PC-9 (cell line): ENCODE measurements at regions of chr4 and their contacts with region 1.

Region 1: GRCh38 chr4:41257257-41257901 is 651 bp downstream of the UCHL1 start:
- DNase-seq: peak; percentile 58 to 88
- H3K4me3 ChIP-seq: peak overlapping the region; percentile 99
- H3K27ac ChIP-seq: peak overlapping the region; percentile 90
- H3K4me1 ChIP-seq: peaks cover 33% of the 10 kb centered on the region
- H3K27me3 ChIP-seq: no peaks in the 10 kb centered on the region
- CTCF ChIP-seq: no peak

Region 2: DNA sequence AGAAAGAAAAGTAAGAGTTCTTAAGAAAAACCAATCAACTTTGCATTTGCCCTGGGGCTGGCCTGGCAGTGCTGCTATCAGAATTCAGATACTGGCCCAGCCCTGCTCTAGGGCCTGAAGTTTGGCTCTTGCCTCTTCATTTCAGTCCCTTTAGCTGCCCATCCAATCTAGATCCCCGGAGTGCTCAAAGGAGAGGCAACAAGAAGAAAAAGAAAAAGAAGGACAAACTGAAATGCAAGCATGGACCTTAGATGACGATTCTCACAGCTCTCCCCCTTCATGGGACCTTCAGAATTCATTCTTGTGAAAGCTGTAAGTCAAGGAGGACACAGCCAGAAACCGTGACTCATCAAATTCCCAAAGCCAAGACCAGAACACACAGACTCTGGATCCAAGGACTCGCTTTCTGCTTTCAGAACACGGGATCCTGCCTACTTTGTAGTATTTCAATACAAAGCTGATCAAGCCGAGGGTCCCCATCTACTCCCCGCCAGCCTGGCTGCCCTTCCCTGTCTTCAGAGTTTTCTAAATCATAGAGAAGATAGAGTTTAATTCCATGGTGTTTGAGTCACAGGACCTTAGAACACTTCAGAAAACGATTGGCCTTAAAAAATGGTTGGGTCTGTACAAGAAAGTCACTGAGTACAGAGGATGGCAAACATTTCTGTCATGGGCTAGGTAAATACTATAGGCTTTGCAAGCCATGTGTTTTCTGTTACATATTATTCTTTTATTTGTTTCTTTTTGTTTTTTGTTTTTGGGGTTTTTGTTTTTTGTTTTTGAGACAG is 731.4 kb before region 1 on chr4:
- CTCF ChIA-PET with region 1: no interaction called
- POLR2A ChIA-PET with region 1: interaction called, 23 read pairs
- intact Hi-C with region 1: no loop called
- DNase-seq: peak; percentile 55 to 81
- H3K4me3 ChIP-seq: peak overlapping the region; percentile 19; the same call in 1 of the 2 replicates
- H3K27ac ChIP-seq: peak overlapping the region; percentile 92
- H3K4me1 ChIP-seq: peaks cover 25% of the 10 kb centered on the region
- H3K27me3 ChIP-seq: no peaks in the 10 kb centered on the region
- CTCF ChIP-seq: no peak

Region 3: DNA sequence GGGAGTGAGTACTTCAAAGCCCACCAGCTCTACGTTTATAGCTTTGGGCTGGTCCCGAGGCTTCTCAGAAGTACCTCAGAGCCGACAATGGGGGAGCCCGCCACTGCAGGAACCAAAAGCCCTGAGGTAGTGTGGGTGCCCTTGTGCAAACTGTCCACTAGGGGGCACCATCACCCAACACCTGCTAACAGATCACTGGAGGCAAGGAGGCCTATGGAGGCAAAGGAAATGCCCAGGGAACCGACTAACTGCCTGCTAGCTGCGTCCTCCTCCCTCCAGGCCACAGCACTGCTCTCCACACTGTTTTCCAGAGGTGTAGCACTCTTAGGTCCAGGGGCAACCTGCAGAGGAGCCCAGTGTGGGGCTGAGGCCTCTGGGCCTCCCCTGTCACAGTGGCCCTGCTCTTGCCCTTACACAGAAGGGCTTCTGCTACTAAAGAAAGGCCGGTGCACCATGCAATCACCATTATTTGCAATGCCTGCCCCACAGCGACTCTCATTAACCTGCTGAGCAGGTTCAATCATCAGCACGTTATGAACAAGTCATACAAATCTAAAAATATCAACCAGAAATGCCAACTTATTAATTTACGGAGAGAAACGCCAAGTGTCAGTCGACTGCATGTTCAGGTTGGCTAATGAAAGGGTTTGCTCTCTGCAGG is 348.5 kb before region 1 on chr4:
- CTCF ChIA-PET with region 1: no interaction called
- POLR2A ChIA-PET with region 1: interaction called, 5 read pairs
- intact Hi-C with region 1: loop called (anchors 2 kb)
- DNase-seq: peak; percentile 41 to 80
- H3K4me3 ChIP-seq: no peak overlapping the region
- H3K27ac ChIP-seq: no peak overlapping the region
- H3K4me1 ChIP-seq: peaks cover 10% of the 10 kb centered on the region; the same call in 1 of the 2 replicates
- H3K27me3 ChIP-seq: no peaks in the 10 kb centered on the region
- CTCF ChIP-seq: peak; percentile 92

Region 4: DNA sequence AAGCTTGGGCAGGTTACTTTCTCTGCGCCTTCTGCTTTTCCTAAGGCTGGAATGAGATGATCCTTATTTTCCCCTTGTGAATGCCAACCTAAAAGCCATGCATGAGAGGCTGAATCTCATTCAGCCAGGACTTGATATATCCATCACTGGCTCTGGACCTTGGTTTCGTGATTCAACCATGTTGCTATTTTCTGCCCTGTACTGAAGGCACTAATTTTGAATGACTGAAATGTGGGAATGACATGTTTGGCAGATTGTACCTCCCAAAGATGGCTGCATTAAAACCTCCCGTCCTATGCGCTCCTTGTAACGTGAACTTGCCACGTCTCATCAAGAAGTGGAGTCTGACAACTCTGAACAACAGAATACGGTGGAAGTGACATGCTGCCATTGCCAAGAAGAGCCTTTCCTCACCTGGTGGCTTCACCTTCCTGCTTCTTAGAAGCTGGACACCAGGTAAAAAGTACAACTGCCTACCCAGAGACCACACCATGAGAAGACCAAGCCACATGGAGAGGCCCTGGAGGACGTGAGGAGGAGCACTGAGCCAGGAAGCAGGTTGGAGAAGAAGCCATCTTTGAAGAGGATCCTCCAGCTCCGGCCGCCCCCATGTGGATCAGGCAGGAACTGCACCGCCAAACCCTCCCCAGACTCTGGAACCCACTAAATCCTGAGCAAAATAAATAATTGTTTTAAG is 333.1 kb before region 1 on chr4:
- CTCF ChIA-PET with region 1: interaction called, 3 read pairs
- POLR2A ChIA-PET with region 1: interaction called, 7 read pairs
- intact Hi-C with region 1: loop called (anchors 1 kb)
- DNase-seq: peak in 1 of 2 experiments; percentile 68
- H3K4me3 ChIP-seq: no peak overlapping the region
- H3K27ac ChIP-seq: no peak overlapping the region
- H3K4me1 ChIP-seq: no peaks in the 10 kb centered on the region
- H3K27me3 ChIP-seq: no peaks in the 10 kb centered on the region
- CTCF ChIP-seq: peak; percentile 94

Region 5: GRCh38 chr4:41111791-41112190 is 145.6 kb before region 1 on chr4:
- CTCF ChIA-PET with region 1: no interaction called
- POLR2A ChIA-PET with region 1: no interaction called
- intact Hi-C with region 1: no loop called
- DNase-seq: no peak
- H3K4me3 ChIP-seq: no peak overlapping the region
- H3K27ac ChIP-seq: no peak overlapping the region
- H3K4me1 ChIP-seq: no peaks in the 10 kb centered on the region
- H3K27me3 ChIP-seq: no peaks in the 10 kb centered on the region
- CTCF ChIP-seq: no peak

Region 6: DNA sequence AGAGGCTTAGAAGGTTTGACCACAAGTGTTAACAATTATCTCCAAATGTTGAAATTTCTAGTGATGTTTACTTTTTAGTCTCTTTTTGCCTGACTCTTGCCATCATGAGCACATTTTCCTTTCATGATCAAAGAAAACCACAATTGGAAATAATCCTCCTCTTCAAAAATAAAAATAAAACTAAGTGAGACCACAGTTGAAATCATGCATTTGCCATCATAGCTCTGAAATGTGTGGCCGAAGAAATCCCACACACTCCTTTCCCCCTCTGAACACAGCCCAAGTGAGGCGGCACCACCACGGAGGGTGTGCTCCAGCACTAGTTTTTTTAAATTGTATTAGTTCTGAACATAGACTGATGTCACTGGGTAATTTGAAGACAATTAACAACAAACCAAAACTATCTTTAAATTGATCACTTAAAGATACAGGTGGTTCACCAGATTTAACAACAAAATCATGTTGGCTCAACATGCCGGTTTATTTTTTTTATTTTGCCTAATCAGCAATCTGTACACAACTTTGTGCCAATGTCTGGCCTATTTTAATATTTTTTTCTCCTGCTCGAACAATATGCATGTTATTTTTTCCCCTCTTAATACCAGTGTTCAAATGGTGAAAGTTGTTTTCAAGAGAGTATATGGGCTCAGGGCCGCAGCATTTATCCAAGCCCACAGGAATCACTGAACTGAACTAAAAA is 60.6 kb before region 1 on chr4:
- CTCF ChIA-PET with region 1: no interaction called
- POLR2A ChIA-PET with region 1: no interaction called
- intact Hi-C with region 1: no loop called
- DNase-seq: no peak
- H3K4me3 ChIP-seq: no peak overlapping the region
- H3K27ac ChIP-seq: no peak overlapping the region
- H3K4me1 ChIP-seq: no peaks in the 10 kb centered on the region
- H3K27me3 ChIP-seq: no peaks in the 10 kb centered on the region
- CTCF ChIP-seq: no peak

Region 7: DNA sequence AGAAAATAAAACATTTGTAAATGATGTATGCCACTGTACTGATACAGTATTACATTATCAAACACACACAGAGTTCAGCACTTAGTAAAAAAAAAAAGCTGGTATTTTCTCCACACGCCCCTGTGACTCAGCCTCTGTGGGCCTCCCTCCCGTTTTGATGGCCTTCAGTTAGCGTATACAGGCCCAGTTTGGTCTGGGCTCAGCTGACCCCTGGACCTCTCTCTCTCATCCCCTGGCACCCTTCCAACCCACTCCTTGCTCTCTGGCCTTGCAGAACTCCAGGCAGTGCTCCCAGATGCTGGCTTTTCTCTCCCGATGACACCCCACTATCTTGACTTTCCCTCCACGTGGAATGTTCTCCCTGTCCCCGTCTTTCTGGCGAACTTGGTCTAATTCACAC is 191.6 kb after region 1 on chr4:
- CTCF ChIA-PET with region 1: no interaction called
- POLR2A ChIA-PET with region 1: interaction called, 16 read pairs
- intact Hi-C with region 1: no loop called
- DNase-seq: no peak
- H3K4me3 ChIP-seq: no peak overlapping the region
- H3K27ac ChIP-seq: no peak overlapping the region
- H3K4me1 ChIP-seq: no peaks in the 10 kb centered on the region; the same call in 1 of the 2 replicates
- H3K27me3 ChIP-seq: no peaks in the 10 kb centered on the region
- CTCF ChIP-seq: no peak

Region 8: DNA sequence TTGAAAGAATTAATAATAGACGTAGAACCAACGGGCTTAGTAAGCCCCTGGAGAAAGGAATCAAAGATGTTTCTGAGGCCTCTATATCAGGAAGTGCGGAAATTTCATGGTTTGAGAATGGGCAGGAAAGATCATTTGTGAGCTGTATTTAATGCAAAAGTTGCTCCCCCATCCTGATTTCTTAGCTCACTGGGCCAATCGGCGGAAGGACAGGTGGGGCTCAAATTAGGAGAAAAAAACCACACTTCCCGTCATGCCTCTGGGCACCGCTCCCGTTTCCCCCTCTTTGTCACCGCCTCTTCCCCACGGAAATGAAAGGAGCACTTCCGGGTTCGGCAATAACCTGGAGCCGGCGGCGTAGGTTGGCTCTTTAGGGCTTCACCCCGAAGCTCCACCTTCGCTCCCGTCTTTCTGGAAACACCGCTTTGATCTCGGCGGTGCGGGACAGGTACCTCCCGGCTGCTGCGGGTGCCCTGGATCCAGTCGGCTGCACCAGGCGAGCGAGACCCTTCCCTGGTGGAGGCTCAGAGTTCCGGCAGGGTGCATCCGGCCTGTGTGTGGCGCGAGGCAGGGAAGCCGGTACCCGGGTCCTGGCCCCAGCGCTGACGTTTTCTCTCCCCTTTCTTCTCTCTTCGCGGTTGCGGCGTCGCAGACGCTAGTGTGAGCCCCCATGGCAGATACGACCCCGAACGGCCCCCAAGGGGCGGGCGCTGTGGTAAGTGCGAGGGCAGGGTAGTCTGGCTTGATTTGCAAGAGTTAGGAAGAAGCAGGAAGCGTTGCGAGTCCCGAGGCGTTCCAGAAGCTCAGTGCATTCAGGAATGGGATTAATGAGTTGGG is 677.7 kb after region 1 on chr4 and contains the start of gene TMEM33:
- CTCF ChIA-PET with region 1: no interaction called
- POLR2A ChIA-PET with region 1: interaction called, 9 read pairs
- intact Hi-C with region 1: loop called (anchors 2 kb)
- DNase-seq: peak; percentile 87 to 88
- H3K4me3 ChIP-seq: peak within 1 kb of the TSS; percentile 98
- H3K27ac ChIP-seq: peak within 1 kb of the TSS; percentile 69
- H3K4me1 ChIP-seq: peaks cover 42% of the 10 kb centered on the region
- H3K27me3 ChIP-seq: no peaks in the 10 kb centered on the region
- CTCF ChIP-seq: no peak
- total RNA-seq, gene TMEM33: 62.3 and 65.0 TPM in 2 replicates